HCT116 (cell line): ENCODE measurements at regions of chr1 and their contacts with region 1.

Region 1: GRCh38 chr1:58783993-58784757 is at the start of gene JUN:
- DNase-seq: peak; percentile 98
- ATAC-seq: peak; percentile 84
- H3K4me3 ChIP-seq: peak within 1 kb of the TSS; percentile 61 to 79
- H3K27ac ChIP-seq: peak within 1 kb of the TSS; percentile 89
- H3K4me1 ChIP-seq: peaks cover 10 to 33% of the 10 kb centered on the region in 2 experiments; a peak in 3 of 4 replicates
- H3K27me3 ChIP-seq: no peaks in the 10 kb centered on the region
- CTCF ChIP-seq: no peak
- POLR2A ChIP-seq: peak; percentile 99
- RAD21 ChIP-seq: no peak; the same call in 1 of the 2 replicates
- total RNA-seq, gene JUN: 18.7 TPM

Region 2: DNA sequence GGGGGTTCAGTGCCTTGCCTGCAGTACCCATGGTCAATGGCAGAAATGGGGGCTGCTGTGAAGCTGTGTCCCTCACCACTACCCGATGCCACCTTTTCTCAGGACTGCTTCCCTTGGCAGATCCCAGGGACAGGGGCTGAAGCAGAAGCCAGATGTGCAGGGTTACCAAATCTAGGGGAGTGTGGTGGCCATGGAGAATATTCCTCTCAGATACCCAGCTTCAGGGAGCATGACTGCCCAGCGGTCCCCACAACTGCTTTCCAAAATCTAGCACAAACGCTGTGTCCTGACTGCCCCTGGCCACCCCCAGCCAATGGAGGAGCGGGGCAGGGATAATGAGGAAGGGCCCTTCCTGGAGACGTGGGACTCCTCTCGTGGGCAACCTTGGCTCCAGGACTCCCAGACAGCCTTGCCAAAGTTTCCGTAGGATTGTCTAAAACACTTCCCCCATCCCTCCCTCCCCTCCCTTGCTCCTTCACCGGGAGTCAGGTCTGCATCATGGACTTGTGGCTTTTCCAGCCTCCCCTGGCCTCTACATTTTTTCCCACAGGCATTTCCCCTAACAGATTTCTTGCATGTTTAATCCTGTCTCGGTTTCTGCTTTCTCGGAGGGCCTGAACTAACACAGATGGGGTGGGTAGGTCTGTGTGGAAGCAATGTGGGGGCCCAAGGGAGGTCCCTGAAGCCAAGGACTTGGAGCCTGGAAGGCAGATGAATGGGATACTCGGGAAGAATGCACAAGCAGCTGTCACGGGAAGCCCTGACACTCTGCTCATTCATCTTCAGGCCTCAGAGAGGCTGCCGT is 318.1 kb before region 1 on chr1:
- CTCF ChIA-PET with region 1: no interaction called
- POLR2A ChIA-PET with region 1: no interaction called
- RAD21 ChIA-PET with region 1: no interaction called
- intact Hi-C with region 1: no loop called
- DNase-seq: no peak
- ATAC-seq: no peak
- H3K4me3 ChIP-seq: no peak overlapping the region
- H3K27ac ChIP-seq: no peak overlapping the region
- H3K4me1 ChIP-seq: no peaks in the 10 kb centered on the region
- H3K27me3 ChIP-seq: peaks cover 36% of the 10 kb centered on the region
- CTCF ChIP-seq: no peak
- POLR2A ChIP-seq: no peak
- RAD21 ChIP-seq: no peak

Region 3: GRCh38 chr1:58768971-58769808 is 15.0 kb before region 1 on chr1:
- CTCF ChIA-PET with region 1: interaction called, 5 read pairs
- POLR2A ChIA-PET with region 1: interaction called, 10 read pairs
- RAD21 ChIA-PET with region 1: no interaction called
- intact Hi-C with region 1: no loop called
- DNase-seq: no peak
- ATAC-seq: peak; percentile 84
- H3K4me3 ChIP-seq: no peak overlapping the region
- H3K27ac ChIP-seq: no peak overlapping the region
- H3K4me1 ChIP-seq: no peaks in the 10 kb centered on the region; a peak in 1 of 4 replicates
- H3K27me3 ChIP-seq: no peaks in the 10 kb centered on the region
- CTCF ChIP-seq: peak; percentile 68 to 86 (median 83)
- POLR2A ChIP-seq: no peak
- RAD21 ChIP-seq: peak; percentile 87

Region 4: DNA sequence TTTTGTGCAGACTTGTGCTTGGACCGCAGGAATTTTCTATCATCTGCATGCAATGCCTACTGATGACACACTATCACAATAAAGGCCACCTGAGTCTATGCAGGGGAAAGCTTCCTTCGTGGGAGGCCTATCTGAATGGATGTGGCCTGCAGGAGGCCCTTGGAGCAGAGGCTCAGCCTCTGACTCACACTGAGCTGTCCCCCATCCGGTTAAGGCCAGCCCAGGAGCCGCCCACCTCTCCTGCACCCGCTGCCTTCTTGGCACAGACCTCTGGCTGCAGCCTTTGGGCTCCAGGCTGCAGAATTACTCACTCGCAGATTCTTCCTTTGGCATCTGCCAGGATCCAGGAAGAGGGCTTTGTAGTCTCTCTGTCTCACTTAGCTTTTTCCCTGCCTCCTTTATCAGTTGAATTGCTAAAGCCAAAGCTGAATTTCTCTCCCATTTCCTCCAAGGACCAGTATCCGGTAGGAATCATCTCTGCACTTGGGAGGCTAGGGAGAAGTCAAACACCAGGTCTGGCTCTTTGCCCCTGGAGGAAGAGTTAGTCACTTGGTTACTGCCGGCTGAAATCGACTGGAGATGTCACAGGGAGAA is 64.7 kb after region 1 on chr1:
- CTCF ChIA-PET with region 1: no interaction called
- POLR2A ChIA-PET with region 1: interaction called, 5 read pairs
- RAD21 ChIA-PET with region 1: no interaction called
- intact Hi-C with region 1: loop called (anchors 1 kb)
- DNase-seq: peak; percentile 94
- ATAC-seq: peak; percentile 97
- H3K4me3 ChIP-seq: peak overlapping the region in 1 of 2 experiments; percentile 39; a peak in 3 of 4 replicates
- H3K27ac ChIP-seq: peak overlapping the region; percentile 48
- H3K4me1 ChIP-seq: peaks cover 13 to 40% of the 10 kb centered on the region in 2 experiments
- H3K27me3 ChIP-seq: no peaks in the 10 kb centered on the region
- CTCF ChIP-seq: peak in 2 of 3 experiments; percentile 7 to 25; a peak in 3 of 6 replicates
- POLR2A ChIP-seq: no peak
- RAD21 ChIP-seq: peak; percentile 36

Region 5: DNA sequence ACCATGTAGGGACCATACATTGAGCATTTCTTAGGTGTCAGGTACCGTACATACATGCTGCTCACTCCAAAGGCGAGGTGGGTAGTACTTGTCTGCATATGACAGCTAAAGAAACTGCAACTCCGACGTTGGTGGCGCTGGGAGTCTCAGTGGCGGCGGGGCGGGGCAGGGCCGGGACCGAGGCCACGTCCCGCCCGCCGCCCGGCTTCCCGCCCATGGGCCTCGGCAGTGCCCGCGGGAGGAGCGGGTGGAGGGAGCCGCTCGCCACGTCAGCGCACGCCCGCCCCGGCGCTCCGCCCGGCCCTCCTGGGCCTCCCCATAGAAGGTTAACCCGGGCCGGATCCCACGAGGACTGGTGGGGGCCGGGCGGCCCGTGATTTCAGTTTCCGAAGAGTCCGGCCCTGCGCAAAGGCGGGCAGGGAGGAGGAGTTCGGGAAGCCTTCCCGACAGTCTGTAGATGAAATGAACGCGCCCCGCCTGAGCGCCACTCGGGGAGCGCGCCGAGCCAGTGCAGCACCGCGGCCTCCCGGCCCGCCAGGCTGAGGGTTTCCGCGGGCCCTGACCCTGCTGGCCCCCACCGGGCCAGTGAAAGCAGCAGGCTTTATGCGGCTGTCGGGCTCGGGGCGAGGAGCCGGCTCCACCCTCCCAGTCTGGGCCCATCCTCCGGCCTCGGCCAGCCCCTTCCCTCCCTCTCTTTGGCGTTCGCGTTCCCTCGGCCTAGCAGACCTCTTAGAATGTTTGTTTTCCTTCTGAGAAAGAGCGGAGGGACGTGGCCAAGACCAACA is 119.5 kb after region 1 on chr1:
- CTCF ChIA-PET with region 1: no interaction called
- POLR2A ChIA-PET with region 1: interaction called, 4 read pairs
- RAD21 ChIA-PET with region 1: no interaction called
- intact Hi-C with region 1: loop called (anchors 1 kb)
- DNase-seq: peak; percentile 55
- ATAC-seq: peak; percentile 94
- H3K4me3 ChIP-seq: peak overlapping the region; percentile 41 to 62
- H3K27ac ChIP-seq: peak overlapping the region; percentile 79
- H3K4me1 ChIP-seq: peaks cover 8 to 19% of the 10 kb centered on the region in 2 experiments; a peak in 3 of 4 replicates
- H3K27me3 ChIP-seq: no peaks in the 10 kb centered on the region
- CTCF ChIP-seq: no peak
- POLR2A ChIP-seq: peak; percentile 73
- RAD21 ChIP-seq: no peak

Region 6: GRCh38 chr1:59029411-59030145 is 245.4 kb after region 1 on chr1:
- CTCF ChIA-PET with region 1: no interaction called
- POLR2A ChIA-PET with region 1: no interaction called
- RAD21 ChIA-PET with region 1: no interaction called
- intact Hi-C with region 1: no loop called
- DNase-seq: no peak
- ATAC-seq: no peak
- H3K4me3 ChIP-seq: no peak overlapping the region
- H3K27ac ChIP-seq: no peak overlapping the region
- H3K4me1 ChIP-seq: peaks cover 0 to 6% of the 10 kb centered on the region in 2 experiments; a peak in 1 of 4 replicates
- H3K27me3 ChIP-seq: no peaks in the 10 kb centered on the region
- CTCF ChIP-seq: no peak
- POLR2A ChIP-seq: no peak
- RAD21 ChIP-seq: no peak

Region 7: GRCh38 chr1:59290193-59290947 is 506.2 kb after region 1 on chr1:
- CTCF ChIA-PET with region 1: no interaction called
- POLR2A ChIA-PET with region 1: interaction called, 3 read pairs
- RAD21 ChIA-PET with region 1: no interaction called
- intact Hi-C with region 1: loop called (anchors 2 kb)
- DNase-seq: peak; percentile 88
- ATAC-seq: peak; percentile 99
- H3K4me3 ChIP-seq: no peak overlapping the region
- H3K27ac ChIP-seq: no peak overlapping the region
- H3K4me1 ChIP-seq: peaks cover 4 to 15% of the 10 kb centered on the region in 2 experiments; a peak in 3 of 4 replicates
- H3K27me3 ChIP-seq: no peaks in the 10 kb centered on the region
- CTCF ChIP-seq: peak; percentile 58 to 63 (median 63); a peak in 5 of 6 replicates
- POLR2A ChIP-seq: no peak
- RAD21 ChIP-seq: peak; percentile 83

Region 8: GRCh38 chr1:59759156-59759925 is 975.2 kb after region 1 on chr1:
- CTCF ChIA-PET with region 1: interaction called, 4 read pairs
- POLR2A ChIA-PET with region 1: no interaction called
- RAD21 ChIA-PET with region 1: no interaction called
- intact Hi-C with region 1: loop called (anchors 5 kb)
- DNase-seq: peak; percentile 59
- ATAC-seq: peak; percentile 96
- H3K4me3 ChIP-seq: 0 out of 4 replicates have a peak overlapping the region, but pooled peaks of 1 of the 2 experiments have one; percentile 7
- H3K27ac ChIP-seq: no peak overlapping the region
- H3K4me1 ChIP-seq: peaks cover 0 to 8% of the 10 kb centered on the region in 2 experiments; a peak in 2 of 4 replicates
- H3K27me3 ChIP-seq: no peaks in the 10 kb centered on the region
- CTCF ChIP-seq: peak; percentile 67 to 95 (median 92)
- POLR2A ChIP-seq: no peak
- RAD21 ChIP-seq: peak; percentile 99